ENCODE measurements at regions of chr6 and their contacts with region 1.

Region 1: GRCh38 chr6:31546962-31547726 is at the start of gene NFKBIL1:
- DNase-seq: peak; percentile 84 to 92 (median 87)
- H3K4me3 ChIP-seq: peak within 1 kb of the TSS; percentile 67
- H3K4me3 Mint-ChIP-seq: peak within 1 kb of the TSS; percentile 74 to 93 (median 91)
- H3K27ac ChIP-seq: peak within 1 kb of the TSS; percentile 71
- H3K27ac Mint-ChIP-seq: peak within 1 kb of the TSS; percentile 83 to 99 (median 96)
- H3K4me1 ChIP-seq: peaks cover 30% of the 10 kb centered on the region
- H3K4me1 Mint-ChIP-seq: peaks cover 38 to 50% (median 49%) of the 10 kb centered on the region in 3 donors
- H3K27me3 ChIP-seq: no peaks in the 10 kb centered on the region
- H3K27me3 Mint-ChIP-seq: no peaks in the 10 kb centered on the region
- total RNA-seq, gene NFKBIL1: 13.5 to 13.8 TPM

Region 2: GRCh38 chr6:31568537-31568961 is 21.4 kb after region 1 on chr6:
- CTCF ChIA-PET with region 1: interaction called, 576 read pairs
- POLR2A ChIA-PET with region 1: interaction called, 5 read pairs
- DNase-seq: peak; percentile 51 to 84 (median 75)
- H3K4me3 ChIP-seq: peak overlapping the region; percentile 1
- H3K4me3 Mint-ChIP-seq: peak overlapping the region; percentile 41 to 81 (median 70)
- H3K27ac ChIP-seq: peak overlapping the region; percentile 52
- H3K27ac Mint-ChIP-seq: peak overlapping the region; percentile 92 to 100 (median 96)
- H3K4me1 ChIP-seq: peaks cover 65% of the 10 kb centered on the region
- H3K4me1 Mint-ChIP-seq: peaks cover 68 to 87% (median 82%) of the 10 kb centered on the region in 3 donors
- H3K27me3 ChIP-seq: no peaks in the 10 kb centered on the region
- H3K27me3 Mint-ChIP-seq: peaks cover 0 to 2% of the 10 kb centered on the region in 2 donors

Region 3: GRCh38 chr6:31822036-31822821 is 275.1 kb after region 1 on chr6:
- CTCF ChIA-PET with region 1: no interaction called
- POLR2A ChIA-PET with region 1: no interaction called
- DNase-seq: peak; percentile 49 to 70 (median 57)
- H3K4me3 ChIP-seq: peak overlapping the region; percentile 90
- H3K4me3 Mint-ChIP-seq: peak overlapping the region; percentile 91 to 99 (median 96)
- H3K27ac ChIP-seq: peak overlapping the region; percentile 93
- H3K27ac Mint-ChIP-seq: peak overlapping the region; percentile 91 to 99 (median 98)
- H3K4me1 ChIP-seq: peaks cover 50% of the 10 kb centered on the region
- H3K4me1 Mint-ChIP-seq: peaks cover 50 to 77% (median 61%) of the 10 kb centered on the region in 3 donors
- H3K27me3 ChIP-seq: no peaks in the 10 kb centered on the region
- H3K27me3 Mint-ChIP-seq: peaks cover 0 to 3% of the 10 kb centered on the region in 2 donors

Measured in CD8-positive, alpha-beta memory T cell (primary cell).